Thyroid gland (tissue), 4 donors: ENCODE measurements at regions of chr20 and their contacts with region 1.

Region 1: DNA sequence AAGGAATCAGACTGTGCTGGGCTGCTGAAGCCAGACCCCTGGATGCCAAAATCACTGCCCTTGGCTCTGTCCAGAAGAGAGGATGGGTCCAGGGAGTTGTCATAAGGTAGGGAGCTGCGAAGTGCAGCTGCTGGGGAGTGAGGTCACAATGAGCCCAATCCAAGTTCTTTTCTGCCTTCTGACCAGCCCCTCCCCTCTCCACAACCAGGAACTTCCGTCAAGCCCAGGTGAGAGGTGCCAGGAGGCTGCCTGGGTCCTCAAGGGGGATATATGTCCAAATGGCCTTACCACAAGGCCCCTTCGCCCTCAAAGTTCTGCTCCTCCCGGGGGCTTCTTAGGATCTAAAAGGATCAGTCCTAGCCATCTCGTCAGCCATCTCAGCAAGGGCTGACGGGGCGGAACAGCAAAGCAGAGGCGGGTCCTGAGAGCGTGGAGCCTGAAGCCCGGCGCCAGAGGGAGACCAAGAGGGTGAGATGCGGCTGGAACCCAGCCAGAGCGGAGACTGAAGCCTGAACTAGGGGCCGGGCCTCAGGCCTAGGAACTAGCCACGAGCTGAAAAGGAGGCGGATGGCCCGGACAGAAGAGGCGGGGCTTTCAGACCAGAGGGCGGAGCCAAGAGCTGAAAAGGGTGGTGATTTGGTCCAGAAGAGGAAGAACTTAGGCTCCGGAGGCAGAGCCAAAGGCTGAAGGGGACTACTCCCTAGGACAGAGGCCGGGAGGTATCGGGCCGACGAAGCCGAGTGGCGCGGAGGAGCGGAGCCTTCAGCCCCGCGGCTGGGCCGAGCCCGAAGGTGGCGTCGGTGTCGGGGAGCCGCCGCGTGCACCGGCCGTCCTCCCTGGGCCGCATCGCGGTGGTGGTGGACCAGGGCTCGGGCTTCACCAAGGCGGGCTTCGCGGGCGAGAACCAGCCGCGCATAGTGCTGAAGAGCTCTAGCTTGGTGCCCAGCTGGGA is at the start of gene ACTL10:
- DNase-seq: peak; percentile 100
- H3K4me3 ChIP-seq: peak within 1 kb of the TSS in 2 of 3 donors; percentile 0 to 66
- H3K27ac ChIP-seq: peak within 1 kb of the TSS; percentile 80 to 94 (median 90)
- H3K4me1 ChIP-seq: peaks cover 20 to 48% of the 10 kb centered on the region in 2 donors
- H3K27me3 ChIP-seq: no peaks in the 10 kb centered on the region
- CTCF ChIP-seq: peak in 4 of 6 experiments; percentile 37 to 45 (median 43)
- POLR2A ChIP-seq: peak; percentile 72 to 95
- total RNA-seq, gene ACTL10: 2.1 to 3.9 (median 2.6) TPM

Region 2: GRCh38 chr20:33731693-33732165 is 65.2 kb after region 1 on chr20 and contains the start of gene ZNF341:
- intact Hi-C with region 1: loop called (anchors 5 kb)
- DNase-seq: peak; percentile 91 to 93
- H3K4me3 ChIP-seq: peak within 1 kb of the TSS; percentile 14 to 77 (median 42)
- H3K27ac ChIP-seq: peak within 1 kb of the TSS; percentile 90 to 96 (median 91)
- H3K4me1 ChIP-seq: peaks cover 21 to 23% of the 10 kb centered on the region in 2 donors
- H3K27me3 ChIP-seq: no peaks in the 10 kb centered on the region
- CTCF ChIP-seq: peak; percentile 66 to 96 (median 88)
- POLR2A ChIP-seq: peak in 1 of 2 donors; percentile 57
- total RNA-seq, gene ZNF341: 1.1 to 3.5 (median 2.8) TPM

Region 3: GRCh38 chr20:33773412-33774089 is 107.0 kb after region 1 on chr20:
- intact Hi-C with region 1: no loop called
- DNase-seq: no peak
- H3K4me3 ChIP-seq: no peak overlapping the region
- H3K27ac ChIP-seq: no peak overlapping the region
- H3K4me1 ChIP-seq: no peaks in the 10 kb centered on the region
- H3K27me3 ChIP-seq: no peaks in the 10 kb centered on the region
- CTCF ChIP-seq: no peak
- POLR2A ChIP-seq: no peak

Region 4: DNA sequence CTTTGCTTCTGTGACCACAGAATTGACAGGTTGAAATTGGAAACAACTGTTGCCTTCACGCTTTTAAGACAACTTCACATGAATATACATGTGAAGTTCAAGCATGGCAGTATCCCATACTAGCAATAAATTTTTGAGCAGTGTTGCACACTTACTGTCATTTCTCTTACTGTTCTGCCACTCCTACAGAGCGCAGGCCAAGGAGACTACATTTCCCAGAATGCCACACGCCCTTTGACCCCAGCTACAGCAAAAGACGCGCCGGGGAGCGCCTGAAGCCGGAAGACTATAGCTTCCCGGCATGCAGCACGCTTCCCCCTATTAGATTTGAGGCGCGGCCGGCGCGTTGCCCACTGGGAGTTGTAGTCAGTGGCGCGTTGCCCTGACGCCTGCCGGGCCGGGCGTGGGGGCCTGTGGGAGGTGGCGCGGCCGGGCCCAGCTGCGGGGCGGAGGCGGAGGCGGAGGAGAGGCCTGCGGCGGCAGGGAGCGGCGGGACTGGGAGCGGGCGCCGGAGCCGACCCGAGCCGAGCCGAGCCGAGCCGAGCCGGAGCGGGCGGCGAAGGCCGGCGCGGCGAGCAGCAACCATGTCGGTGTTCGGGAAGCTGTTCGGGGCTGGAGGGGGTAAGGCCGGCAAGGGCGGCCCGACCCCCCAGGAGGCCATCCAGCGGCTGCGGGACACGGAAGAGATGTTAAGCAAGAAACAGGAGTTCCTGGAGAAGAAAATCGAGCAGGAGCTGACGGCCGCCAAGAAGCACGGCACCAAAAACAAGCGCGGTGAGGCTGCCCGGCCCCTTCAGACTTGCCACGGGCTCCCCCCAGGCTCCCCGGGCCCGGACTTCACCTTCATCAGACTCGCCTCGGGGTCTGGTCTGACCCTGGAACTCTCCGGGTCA is 144.6 kb after region 1 on chr20 and contains the start of gene CHMP4B:
- intact Hi-C with region 1: no loop called
- DNase-seq: peak; percentile 100
- H3K4me3 ChIP-seq: peak within 1 kb of the TSS; percentile 66 to 90 (median 71)
- H3K27ac ChIP-seq: peak within 1 kb of the TSS; percentile 78 to 95 (median 86)
- H3K4me1 ChIP-seq: peaks cover 22 to 25% of the 10 kb centered on the region in 2 donors
- H3K27me3 ChIP-seq: no peaks in the 10 kb centered on the region
- CTCF ChIP-seq: no peak
- POLR2A ChIP-seq: peak; percentile 76 to 96
- total RNA-seq, gene CHMP4B: 70.3 to 93.5 (median 85.7) TPM